ENCODE measurements at regions of chr14 and their contacts with region 1.

Region 1: GRCh38 chr14:71320107-71320733 is 413.0 kb downstream of the PCNX1 start:
- DNase-seq: peak; percentile 96
- ATAC-seq: peak; percentile 79
- H3K4me3 ChIP-seq: peak within 1 kb of the TSS; percentile 98
- H3K27ac ChIP-seq: peak within 1 kb of the TSS; percentile 94
- H3K4me1 ChIP-seq: peaks cover 11% of the 10 kb centered on the region
- H3K27me3 ChIP-seq: no peaks in the 10 kb centered on the region
- CTCF ChIP-seq: no peak
- EP300 ChIP-seq: peak in 1 of 2 experiments; percentile 57; a peak in 2 of 4 replicates
- POLR2A ChIP-seq: peak; percentile 85
- RAD21 ChIP-seq: no peak

Region 2: GRCh38 chr14:71138448-71139293 is 181.5 kb before region 1 on chr14:
- CTCF ChIA-PET with region 1: interaction called, 23 read pairs
- POLR2A ChIA-PET with region 1: interaction called, 6 read pairs
- RAD21 ChIA-PET with region 1: interaction called, 23 read pairs
- SMC1A ChIA-PET with region 1: interaction called, 53 read pairs
- in situ Hi-C with region 1: no loop called
- intact Hi-C with region 1: loop called (anchors 2 kb)
- DNase-seq: peak; percentile 9
- ATAC-seq: peak; percentile 85
- H3K4me3 ChIP-seq: no peak overlapping the region
- H3K27ac ChIP-seq: no peak overlapping the region
- H3K4me1 ChIP-seq: peaks cover 17% of the 10 kb centered on the region
- H3K27me3 ChIP-seq: no peaks in the 10 kb centered on the region
- CTCF ChIP-seq: peak; percentile 87 to 90 (median 88)
- EP300 ChIP-seq: no peak
- POLR2A ChIP-seq: no peak
- RAD21 ChIP-seq: peak; percentile 99

Region 3: GRCh38 chr14:71395151-71395604 is 75.0 kb after region 1 on chr14:
- CTCF ChIA-PET with region 1: interaction called, 12 read pairs
- POLR2A ChIA-PET with region 1: interaction called, 6 read pairs
- RAD21 ChIA-PET with region 1: interaction called, 25 read pairs
- SMC1A ChIA-PET with region 1: interaction called, 50 read pairs
- in situ Hi-C with region 1: loop called (anchors 5 kb)
- intact Hi-C with region 1: loop called (anchors 1 kb)
- DNase-seq: no peak
- ATAC-seq: peak; percentile 19
- H3K4me3 ChIP-seq: no peak overlapping the region
- H3K27ac ChIP-seq: no peak overlapping the region
- H3K4me1 ChIP-seq: peaks cover 18% of the 10 kb centered on the region
- H3K27me3 ChIP-seq: no peaks in the 10 kb centered on the region
- CTCF ChIP-seq: no peak
- EP300 ChIP-seq: no peak
- POLR2A ChIP-seq: no peak
- RAD21 ChIP-seq: no peak

Region 4: DNA sequence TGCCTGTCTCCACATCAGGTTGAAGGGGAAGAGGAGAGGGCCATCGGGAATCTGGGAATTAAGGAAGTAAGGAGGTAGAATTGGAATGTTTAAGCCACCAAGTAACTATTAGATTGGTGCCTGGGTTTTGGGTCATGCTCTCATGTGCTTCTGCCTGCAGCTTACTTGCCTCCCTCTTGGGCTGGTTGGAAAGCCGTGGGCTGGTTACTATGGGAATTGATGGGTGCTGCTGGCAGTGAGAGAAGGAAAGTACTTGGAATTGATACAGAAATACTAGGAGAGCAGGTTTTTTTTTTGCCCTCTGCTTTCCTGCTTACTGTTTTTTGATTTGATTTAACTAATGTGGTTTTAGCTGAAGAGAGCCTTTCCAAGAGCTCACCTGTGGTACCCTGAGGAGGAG is 118.5 kb after region 1 on chr14:
- CTCF ChIA-PET with region 1: interaction called, 3 read pairs
- POLR2A ChIA-PET with region 1: no interaction called
- RAD21 ChIA-PET with region 1: interaction called, 21 read pairs
- SMC1A ChIA-PET with region 1: no interaction called
- in situ Hi-C with region 1: no loop called
- intact Hi-C with region 1: loop called (anchors 10 kb)
- DNase-seq: no peak
- ATAC-seq: no peak
- H3K4me3 ChIP-seq: no peak overlapping the region
- H3K27ac ChIP-seq: no peak overlapping the region
- H3K4me1 ChIP-seq: peaks cover 16% of the 10 kb centered on the region
- H3K27me3 ChIP-seq: no peaks in the 10 kb centered on the region
- CTCF ChIP-seq: no peak
- EP300 ChIP-seq: no peak
- POLR2A ChIP-seq: no peak
- RAD21 ChIP-seq: no peak

Region 5: DNA sequence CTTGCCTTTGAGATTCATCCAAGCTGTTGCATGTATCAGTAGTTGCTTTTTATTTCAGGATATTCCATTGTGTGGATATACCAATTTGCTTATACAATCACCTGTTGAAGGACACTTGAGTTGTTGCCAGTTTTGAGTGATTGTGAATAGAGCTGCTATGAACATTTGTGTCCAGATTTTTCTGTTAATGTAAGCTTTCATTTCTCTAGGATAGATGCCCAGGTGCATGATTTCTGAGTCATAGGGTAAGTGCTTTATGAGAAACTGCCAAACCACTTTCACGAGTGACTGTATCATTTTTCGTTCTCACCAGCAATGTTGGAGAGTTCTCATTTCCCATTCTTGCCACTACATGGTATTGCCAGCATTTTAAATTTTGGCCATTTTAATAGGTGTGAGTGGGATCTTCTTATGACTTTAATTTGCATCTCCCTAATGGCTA is 177.4 kb after region 1 on chr14:
- CTCF ChIA-PET with region 1: interaction called, 9 read pairs
- POLR2A ChIA-PET with region 1: interaction called, 5 read pairs
- RAD21 ChIA-PET with region 1: interaction called, 74 read pairs
- SMC1A ChIA-PET with region 1: interaction called, 35 read pairs
- in situ Hi-C with region 1: loop called (anchors 5 kb)
- intact Hi-C with region 1: loop called (anchors 2 kb)
- DNase-seq: peak; percentile 98
- ATAC-seq: peak; percentile 91
- H3K4me3 ChIP-seq: no peak overlapping the region
- H3K27ac ChIP-seq: peak overlapping the region; percentile 94
- H3K4me1 ChIP-seq: peaks cover 43% of the 10 kb centered on the region
- H3K27me3 ChIP-seq: no peaks in the 10 kb centered on the region
- CTCF ChIP-seq: no peak
- EP300 ChIP-seq: peak; percentile 99
- POLR2A ChIP-seq: no peak
- RAD21 ChIP-seq: no peak; the same call in none of the 2 replicates

Region 6: DNA sequence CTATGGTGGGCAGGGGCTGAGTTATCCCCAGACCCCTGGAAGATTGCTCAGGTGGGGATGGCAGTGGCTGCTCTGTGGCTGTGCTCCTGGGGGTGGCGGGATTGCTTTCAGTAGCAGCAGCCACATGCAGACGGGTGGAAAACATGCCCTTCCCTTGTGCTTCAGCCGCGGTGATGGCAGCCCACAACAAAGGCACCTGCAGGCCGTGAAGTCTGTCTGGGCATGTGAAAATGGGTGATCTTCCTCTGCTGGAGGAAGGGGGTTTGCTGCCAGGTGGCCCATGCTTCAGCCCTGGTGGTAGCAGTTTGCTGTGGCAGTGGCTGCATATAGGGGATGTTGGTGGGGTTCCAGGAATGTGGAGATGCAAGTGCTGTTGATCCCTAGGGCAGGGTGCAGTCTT is 285.8 kb after region 1 on chr14:
- CTCF ChIA-PET with region 1: no interaction called
- POLR2A ChIA-PET with region 1: no interaction called
- RAD21 ChIA-PET with region 1: interaction called, 3 read pairs
- SMC1A ChIA-PET with region 1: interaction called, 3 read pairs
- in situ Hi-C with region 1: no loop called
- intact Hi-C with region 1: loop called (anchors 5 kb)
- DNase-seq: no peak
- ATAC-seq: peak; percentile 14
- H3K4me3 ChIP-seq: no peak overlapping the region
- H3K27ac ChIP-seq: peak overlapping the region; percentile 77
- H3K4me1 ChIP-seq: peaks cover 23% of the 10 kb centered on the region
- H3K27me3 ChIP-seq: no peaks in the 10 kb centered on the region
- CTCF ChIP-seq: no peak
- EP300 ChIP-seq: no peak
- POLR2A ChIP-seq: no peak
- RAD21 ChIP-seq: no peak

Region 7: DNA sequence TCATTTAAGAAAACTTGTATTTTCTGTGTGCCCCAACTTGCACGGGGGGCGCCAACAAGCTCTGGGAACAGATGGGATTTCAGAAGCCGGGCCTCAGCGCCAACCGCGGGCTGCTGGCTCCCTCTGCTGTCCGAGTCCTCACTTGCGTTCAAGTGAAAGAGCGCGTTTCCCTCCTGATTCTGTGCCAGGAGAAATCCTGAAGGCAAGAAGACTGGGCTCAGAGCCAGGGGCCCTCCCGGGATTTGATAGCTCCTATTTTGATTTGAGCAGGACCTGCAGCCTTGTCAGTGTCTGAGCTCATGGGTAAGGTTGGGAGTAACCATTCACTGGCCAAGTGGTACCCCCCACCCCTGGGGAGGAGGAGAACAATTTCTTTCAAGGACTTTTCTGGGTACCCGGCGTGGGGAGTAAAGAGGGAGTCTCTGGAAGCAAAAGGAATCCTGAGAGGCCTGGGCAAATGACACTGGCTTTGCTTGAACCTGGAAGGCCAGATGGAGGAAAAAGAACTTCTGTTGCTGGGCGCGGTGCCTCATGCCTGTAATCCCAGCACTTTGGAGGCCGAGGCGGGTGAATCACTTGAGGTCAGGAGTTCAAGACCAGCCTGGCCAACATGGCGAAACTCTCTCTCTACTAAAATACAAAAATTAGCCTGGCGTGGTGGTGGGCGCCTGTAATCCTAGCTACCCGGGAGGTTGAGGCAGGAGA is 433.1 kb after region 1 on chr14:
- CTCF ChIA-PET with region 1: interaction called, 43 read pairs
- POLR2A ChIA-PET with region 1: no interaction called
- RAD21 ChIA-PET with region 1: interaction called, 67 read pairs
- SMC1A ChIA-PET with region 1: interaction called, 59 read pairs
- in situ Hi-C with region 1: loop called (anchors 5 kb)
- intact Hi-C with region 1: loop called (anchors 1 kb)
- DNase-seq: peak; percentile 27
- ATAC-seq: peak; percentile 85
- H3K4me3 ChIP-seq: no peak overlapping the region
- H3K27ac ChIP-seq: no peak overlapping the region
- H3K4me1 ChIP-seq: no peaks in the 10 kb centered on the region
- H3K27me3 ChIP-seq: no peaks in the 10 kb centered on the region
- CTCF ChIP-seq: peak; percentile 88 to 94 (median 91)
- EP300 ChIP-seq: no peak
- POLR2A ChIP-seq: no peak
- RAD21 ChIP-seq: peak; percentile 99

Measured in GM12878 (cell line).